HepG2 (cell line): ENCODE measurements at regions of chr13 and their contacts with region 1.

Region 1: GRCh38 chr13:71477735-71478134 is 389.3 kb downstream of the DACH1 start:
- DNase-seq: no peak
- ATAC-seq: no peak
- H3K4me3 ChIP-seq: peak overlapping the region in 1 of 3 experiments; percentile 5; a peak in 1 of 6 replicates
- H3K27ac ChIP-seq: no peak overlapping the region
- H3K4me1 ChIP-seq: no peaks in the 10 kb centered on the region
- H3K27me3 ChIP-seq: no peaks in the 10 kb centered on the region
- CTCF ChIP-seq: peak; percentile 26; the same call in 1 of the 2 replicates
- EP300 ChIP-seq: no peak
- POLR2A ChIP-seq: no peak
- RAD21 ChIP-seq: no peak

Region 2: GRCh38 chr13:70541451-70541850 is 936.3 kb before region 1 on chr13:
- CTCF ChIA-PET with region 1: no interaction called
- POLR2A ChIA-PET with region 1: no interaction called
- in situ Hi-C with region 1: no loop called
- intact Hi-C with region 1: no loop called
- DNase-seq: no peak
- ATAC-seq: no peak
- H3K4me3 ChIP-seq: no peak overlapping the region
- H3K27ac ChIP-seq: no peak overlapping the region
- H3K4me1 ChIP-seq: no peaks in the 10 kb centered on the region
- H3K27me3 ChIP-seq: no peaks in the 10 kb centered on the region
- CTCF ChIP-seq: no peak
- EP300 ChIP-seq: no peak
- POLR2A ChIP-seq: no peak
- RAD21 ChIP-seq: no peak

Region 3: DNA sequence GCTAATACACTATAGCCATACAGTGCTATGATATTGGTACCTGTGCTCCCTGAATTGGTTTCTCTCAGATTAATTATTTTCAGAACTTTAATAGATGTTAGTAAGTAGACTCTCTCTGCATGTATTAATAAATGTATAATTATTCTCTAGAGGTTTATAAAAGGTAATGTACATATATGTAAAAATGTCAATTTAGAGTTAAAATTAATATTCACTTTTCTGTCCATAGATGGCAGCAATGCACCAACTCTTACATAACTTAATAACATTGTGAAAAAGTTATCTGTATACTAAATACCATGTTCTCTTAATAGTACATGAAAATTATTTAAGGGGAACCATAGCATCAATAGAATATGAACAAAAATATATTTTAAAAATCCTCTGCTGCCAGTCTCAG is 854.5 kb before region 1 on chr13:
- CTCF ChIA-PET with region 1: no interaction called
- POLR2A ChIA-PET with region 1: no interaction called
- in situ Hi-C with region 1: no loop called
- intact Hi-C with region 1: loop called (anchors 10 kb)
- DNase-seq: no peak
- ATAC-seq: no peak
- H3K4me3 ChIP-seq: no peak overlapping the region
- H3K27ac ChIP-seq: no peak overlapping the region
- H3K4me1 ChIP-seq: no peaks in the 10 kb centered on the region
- H3K27me3 ChIP-seq: no peaks in the 10 kb centered on the region
- CTCF ChIP-seq: peak; percentile 17
- EP300 ChIP-seq: no peak
- POLR2A ChIP-seq: no peak
- RAD21 ChIP-seq: no peak

Region 4: GRCh38 chr13:71285700-71286099 is 192.0 kb before region 1 on chr13:
- CTCF ChIA-PET with region 1: no interaction called
- POLR2A ChIA-PET with region 1: no interaction called
- in situ Hi-C with region 1: no loop called
- intact Hi-C with region 1: loop called (anchors 5 kb)
- DNase-seq: no peak
- ATAC-seq: no peak
- H3K4me3 ChIP-seq: no peak overlapping the region
- H3K27ac ChIP-seq: no peak overlapping the region
- H3K4me1 ChIP-seq: no peaks in the 10 kb centered on the region
- H3K27me3 ChIP-seq: no peaks in the 10 kb centered on the region
- CTCF ChIP-seq: 0 out of 2 replicates have a peak, but pooled peaks have one; percentile 16
- EP300 ChIP-seq: no peak
- POLR2A ChIP-seq: no peak
- RAD21 ChIP-seq: no peak

Region 5: DNA sequence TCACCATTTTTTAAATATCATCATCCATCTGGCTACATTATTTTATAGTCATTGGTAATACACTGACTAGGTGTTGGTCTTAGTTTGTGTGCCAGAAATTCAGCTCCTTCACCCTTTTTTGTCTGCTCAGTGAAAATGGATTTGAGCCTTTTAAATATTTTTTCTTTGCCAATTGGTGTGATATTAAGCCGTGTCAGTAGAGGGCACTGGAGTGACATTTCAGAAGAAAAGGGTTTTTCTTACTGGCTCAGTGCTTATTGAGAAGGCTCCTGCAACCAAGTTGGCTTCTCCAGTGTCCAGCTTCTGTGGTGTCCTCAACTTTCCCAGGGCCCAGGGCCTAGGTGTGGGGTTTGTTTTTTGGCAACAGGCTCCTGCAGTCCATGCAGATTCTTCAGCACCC is 157.3 kb before region 1 on chr13:
- CTCF ChIA-PET with region 1: no interaction called
- POLR2A ChIA-PET with region 1: no interaction called
- in situ Hi-C with region 1: no loop called
- intact Hi-C with region 1: loop called (anchors 1 kb)
- DNase-seq: peak; percentile 24
- ATAC-seq: peak; percentile 64
- H3K4me3 ChIP-seq: no peak overlapping the region
- H3K27ac ChIP-seq: no peak overlapping the region
- H3K4me1 ChIP-seq: no peaks in the 10 kb centered on the region
- H3K27me3 ChIP-seq: no peaks in the 10 kb centered on the region
- CTCF ChIP-seq: peak; percentile 66
- EP300 ChIP-seq: no peak
- POLR2A ChIP-seq: no peak
- RAD21 ChIP-seq: no peak

Region 6: DNA sequence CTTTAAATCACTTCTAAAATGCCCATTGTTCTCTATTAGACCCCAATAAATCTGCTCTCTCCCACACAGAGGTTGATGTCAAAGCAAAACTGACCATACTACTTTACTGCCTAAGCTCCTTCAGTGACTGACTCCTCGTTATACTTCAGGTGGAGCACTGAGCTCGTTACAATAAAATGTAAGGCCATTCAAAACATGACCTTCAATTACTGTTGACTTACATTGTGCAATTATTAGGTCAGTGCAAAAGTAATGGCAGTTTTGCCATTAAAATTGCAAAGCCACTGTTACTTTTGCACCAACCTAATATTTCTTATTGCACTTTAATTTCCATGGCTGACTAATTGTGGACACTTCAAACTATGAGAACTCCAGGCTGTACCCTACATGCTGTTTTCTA is 934.7 kb after region 1 on chr13:
- CTCF ChIA-PET with region 1: no interaction called
- POLR2A ChIA-PET with region 1: no interaction called
- in situ Hi-C with region 1: no loop called
- intact Hi-C with region 1: no loop called
- DNase-seq: no peak
- ATAC-seq: no peak; the same call in 2 of the 3 replicates
- H3K4me3 ChIP-seq: no peak overlapping the region
- H3K27ac ChIP-seq: no peak overlapping the region
- H3K4me1 ChIP-seq: no peaks in the 10 kb centered on the region
- H3K27me3 ChIP-seq: no peaks in the 10 kb centered on the region
- CTCF ChIP-seq: no peak
- EP300 ChIP-seq: no peak
- POLR2A ChIP-seq: no peak
- RAD21 ChIP-seq: no peak